Naive thymus-derived CD4-positive, alpha-beta T cell (primary cell): ENCODE measurements at regions of chr9 and their contacts with region 1.

Region 1: DNA sequence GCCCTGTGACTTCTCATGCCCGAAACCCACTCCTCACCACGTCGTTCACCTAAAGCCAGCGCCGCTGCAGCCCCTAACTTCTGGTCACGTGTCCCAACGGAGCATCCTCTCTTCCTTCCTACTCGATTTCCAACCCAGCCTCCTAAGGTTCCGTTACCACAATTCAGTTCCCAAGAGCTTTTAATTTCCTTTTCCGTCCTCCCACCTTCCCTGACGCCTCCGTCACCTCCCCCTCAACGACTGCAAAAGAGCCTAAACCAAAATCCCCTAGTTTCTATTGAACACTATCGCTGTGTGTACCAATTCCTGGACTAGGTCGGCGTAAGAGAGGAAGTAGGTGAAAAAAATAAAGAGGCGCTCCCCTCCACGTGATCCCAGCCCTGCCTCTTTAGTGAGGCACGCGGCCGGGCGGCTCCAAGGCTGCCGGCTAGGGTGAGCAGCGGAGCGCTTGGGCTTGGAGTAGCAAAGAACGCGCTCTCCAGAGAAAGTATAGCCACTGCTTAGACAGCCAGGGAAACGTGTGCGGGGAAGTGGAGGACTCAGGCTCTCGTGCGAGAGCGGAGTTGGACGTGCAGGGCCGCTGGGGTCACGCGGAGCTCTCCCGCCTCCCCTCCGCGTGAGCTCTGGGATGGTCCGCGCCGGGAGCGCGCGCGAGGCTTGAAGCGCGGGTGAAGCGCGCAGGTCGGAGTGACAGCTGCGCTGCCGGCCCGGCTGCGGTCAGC is at the starts of genes CENPP and NOL8:
- DNase-seq: peak; percentile 75 to 91 (median 89)
- ATAC-seq: peak; percentile 95
- H3K4me3 ChIP-seq: peak within 1 kb of the TSS; percentile 90
- H3K4me3 Mint-ChIP-seq: peak within 1 kb of the TSS; percentile 94 to 100 (median 98)
- H3K27ac ChIP-seq: peak within 1 kb of the TSS; percentile 88
- H3K27ac Mint-ChIP-seq: peak within 1 kb of the TSS; percentile 97 to 100 (median 99)
- H3K4me1 ChIP-seq: peaks cover 11 to 12% of the 10 kb centered on the region in 2 donors
- H3K4me1 Mint-ChIP-seq: peaks cover 14 to 41% (median 35%) of the 10 kb centered on the region in 7 donors
- H3K27me3 ChIP-seq: no peaks in the 10 kb centered on the region
- H3K27me3 Mint-ChIP-seq: no peaks in the 10 kb centered on the region
- total RNA-seq, gene CENPP: 2.5 to 24.3 (median 4.1) TPM
- total RNA-seq, gene NOL8: 42.8 to 115 (median 67.2) TPM

Region 2: DNA sequence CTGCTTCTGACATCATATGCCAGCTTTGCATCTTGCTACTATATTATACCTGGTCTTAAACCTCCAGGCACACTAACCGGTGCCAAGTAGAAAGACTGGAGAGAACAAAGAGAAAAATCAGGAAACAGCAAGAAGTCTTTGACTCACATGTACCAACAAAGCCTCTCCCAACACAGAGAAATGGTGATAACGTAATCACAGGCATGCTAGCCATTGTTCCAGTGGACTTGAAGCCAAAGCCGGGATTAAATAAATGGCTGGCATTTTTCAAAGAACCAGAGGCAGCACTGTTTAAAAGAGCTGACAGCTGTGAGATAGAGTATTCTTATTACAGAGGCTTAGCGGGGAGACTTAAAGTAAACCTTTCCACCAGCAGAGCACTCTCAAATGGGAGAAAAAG is 753.4 kb before region 1 on chr9:
- CTCF ChIA-PET with region 1: no interaction called
- POLR2A ChIA-PET with region 1: no interaction called
- intact Hi-C with region 1: no loop called
- DNase-seq: no peak
- ATAC-seq: no peak
- H3K4me3 ChIP-seq: no peak overlapping the region
- H3K4me3 Mint-ChIP-seq: no peak overlapping the region
- H3K27ac ChIP-seq: no peak overlapping the region
- H3K27ac Mint-ChIP-seq: no peak overlapping the region
- H3K4me1 ChIP-seq: no peaks in the 10 kb centered on the region
- H3K4me1 Mint-ChIP-seq: no peaks in the 10 kb centered on the region
- H3K27me3 ChIP-seq: no peaks in the 10 kb centered on the region
- H3K27me3 Mint-ChIP-seq: peaks cover 16 to 27% (median 26%) of the 10 kb centered on the region in 5 donors

Region 3: GRCh38 chr9:92115071-92115858 is 210.2 kb before region 1 on chr9 and contains the start of gene SPTLC1:
- CTCF ChIA-PET with region 1: no interaction called
- POLR2A ChIA-PET with region 1: interaction called, 5 read pairs
- intact Hi-C with region 1: loop called (anchors 1 kb)
- DNase-seq: peak; percentile 89 to 97 (median 94)
- ATAC-seq: peak; percentile 99
- H3K4me3 ChIP-seq: peak within 1 kb of the TSS; percentile 85
- H3K4me3 Mint-ChIP-seq: peak within 1 kb of the TSS; percentile 91 to 99 (median 97)
- H3K27ac ChIP-seq: peak within 1 kb of the TSS; percentile 96
- H3K27ac Mint-ChIP-seq: peak within 1 kb of the TSS; percentile 96 to 100 (median 98)
- H3K4me1 ChIP-seq: peaks cover 17 to 20% of the 10 kb centered on the region in 2 donors
- H3K4me1 Mint-ChIP-seq: peaks cover 17 to 51% (median 42%) of the 10 kb centered on the region in 7 donors
- H3K27me3 ChIP-seq: no peaks in the 10 kb centered on the region
- H3K27me3 Mint-ChIP-seq: peaks cover 0 to 2% (median 0%) of the 10 kb centered on the region in 5 donors
- total RNA-seq, gene SPTLC1: 45.6 to 64.0 (median 51.0) TPM

Region 4: DNA sequence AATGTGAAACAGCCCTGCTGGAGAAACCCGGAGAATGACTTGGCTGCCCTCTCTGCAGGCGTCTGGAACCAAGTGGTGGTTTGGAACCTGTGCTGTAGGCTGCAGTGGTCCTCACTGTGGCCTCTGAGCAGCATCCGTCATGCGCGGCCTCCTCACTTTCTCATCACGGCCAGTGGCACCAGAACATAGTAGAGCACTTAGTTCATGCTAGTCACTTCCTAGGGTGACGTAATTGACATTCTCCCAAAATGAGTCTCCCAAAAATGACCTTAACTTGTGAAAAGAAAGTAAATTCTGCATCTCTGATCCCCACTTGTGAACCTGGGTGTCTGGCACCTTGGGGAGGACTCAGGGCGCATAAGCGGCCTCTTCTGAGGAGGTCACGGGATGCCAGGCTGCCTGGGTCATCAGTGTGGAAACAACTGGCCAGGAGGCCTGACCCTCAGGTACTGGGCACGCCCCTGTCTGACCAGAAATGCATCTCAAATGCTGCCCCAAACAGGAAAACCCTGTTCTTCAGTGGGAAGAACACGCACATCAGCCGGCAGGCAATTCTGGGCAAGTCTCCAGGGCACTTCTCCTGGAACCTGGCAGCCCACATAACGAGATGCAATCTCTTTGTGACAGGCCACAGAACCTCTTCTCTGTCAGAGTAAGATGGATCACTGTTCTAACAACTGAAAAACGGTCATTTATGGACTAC is 173.6 kb before region 1 on chr9:
- CTCF ChIA-PET with region 1: no interaction called
- POLR2A ChIA-PET with region 1: no interaction called
- intact Hi-C with region 1: no loop called
- DNase-seq: no peak
- ATAC-seq: no peak
- H3K4me3 ChIP-seq: no peak overlapping the region
- H3K4me3 Mint-ChIP-seq: no peak overlapping the region
- H3K27ac ChIP-seq: no peak overlapping the region
- H3K27ac Mint-ChIP-seq: no peak overlapping the region
- H3K4me1 ChIP-seq: no peaks in the 10 kb centered on the region
- H3K4me1 Mint-ChIP-seq: peaks cover 0 to 14% (median 0%) of the 10 kb centered on the region in 7 donors
- H3K27me3 ChIP-seq: no peaks in the 10 kb centered on the region
- H3K27me3 Mint-ChIP-seq: peaks cover 4 to 21% (median 10%) of the 10 kb centered on the region in 5 donors

Region 5: DNA sequence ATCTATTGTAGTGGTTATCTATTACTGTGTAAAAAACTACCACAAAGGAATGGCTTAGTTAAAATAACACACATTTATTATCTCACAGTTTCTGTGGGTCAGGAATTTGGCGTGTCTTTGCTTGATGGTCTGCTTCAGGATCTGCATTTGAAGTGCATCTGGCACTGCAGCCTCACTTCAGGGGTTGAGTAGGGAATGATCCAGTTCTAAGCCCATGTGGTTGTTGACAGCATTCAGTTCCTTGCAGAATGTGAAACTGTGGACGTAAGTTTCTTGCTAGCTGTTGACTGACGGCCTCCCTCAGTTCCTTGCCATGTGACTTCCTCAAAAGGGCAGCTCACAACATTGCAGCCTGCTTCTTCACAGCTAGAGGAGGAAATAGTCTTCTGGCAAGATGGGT is 81.0 kb after region 1 on chr9:
- CTCF ChIA-PET with region 1: no interaction called
- POLR2A ChIA-PET with region 1: interaction called, 12 read pairs
- intact Hi-C with region 1: loop called in 1 of 2 experiments (anchors 5 kb)
- DNase-seq: peak in 7 of 9 donors; percentile 27 to 60 (median 49)
- ATAC-seq: peak; percentile 91
- H3K4me3 ChIP-seq: peak overlapping the region; percentile 59
- H3K4me3 Mint-ChIP-seq: peak overlapping the region; percentile 63 to 82 (median 77)
- H3K27ac ChIP-seq: peak overlapping the region; percentile 55
- H3K27ac Mint-ChIP-seq: peak overlapping the region; percentile 71 to 90 (median 87)
- H3K4me1 ChIP-seq: peaks cover 0 to 22% of the 10 kb centered on the region in 2 donors
- H3K4me1 Mint-ChIP-seq: peaks cover 15 to 30% (median 28%) of the 10 kb centered on the region in 7 donors
- H3K27me3 ChIP-seq: no peaks in the 10 kb centered on the region
- H3K27me3 Mint-ChIP-seq: no peaks in the 10 kb centered on the region

Region 6: DNA sequence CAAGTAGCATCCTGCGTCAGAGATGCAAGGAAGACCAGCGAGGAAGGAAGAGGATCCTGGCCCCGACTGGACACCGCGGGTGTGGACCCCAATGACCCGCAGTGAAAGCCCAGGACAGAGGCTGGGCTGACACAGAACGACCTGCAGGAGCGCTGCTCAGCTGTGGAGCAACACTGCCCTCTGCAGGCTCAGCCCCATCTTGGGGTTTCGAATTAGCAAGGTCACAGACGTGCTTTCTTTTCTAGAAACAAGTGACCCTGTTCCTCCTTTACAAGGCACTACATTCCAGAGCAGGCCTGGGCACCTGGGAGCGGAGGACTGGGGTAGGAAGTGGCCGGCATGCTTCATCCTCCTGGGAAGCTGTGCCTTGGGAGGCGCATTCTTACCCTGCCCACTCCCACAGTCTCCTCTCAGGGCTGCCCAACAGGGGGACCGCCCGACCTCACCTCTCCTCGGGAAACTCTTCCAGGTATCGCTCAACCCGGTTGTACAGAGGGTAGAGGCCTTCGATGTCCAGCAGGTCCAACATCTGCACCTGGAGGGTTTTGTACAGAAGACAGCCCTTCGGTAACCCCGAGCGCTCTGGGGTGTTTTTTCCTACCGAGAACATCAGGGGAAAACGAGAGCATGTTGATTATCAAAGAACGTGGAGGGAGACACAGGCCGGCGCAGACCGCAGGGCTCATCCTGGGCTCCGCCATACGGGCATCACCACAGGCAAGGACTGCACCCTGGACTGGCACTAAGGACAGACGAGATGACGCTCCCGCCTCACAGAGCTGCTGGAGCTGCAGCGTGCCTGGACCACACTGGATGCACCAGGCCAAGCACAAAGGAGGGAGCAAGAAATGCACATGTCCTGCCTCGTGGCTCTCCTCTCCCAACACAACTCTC is 309.5 kb after region 1 on chr9:
- CTCF ChIA-PET with region 1: no interaction called
- POLR2A ChIA-PET with region 1: no interaction called
- intact Hi-C with region 1: loop called in 1 of 2 experiments (anchors 5 kb)
- DNase-seq: peak; percentile 17 to 67 (median 46)
- ATAC-seq: peak; percentile 86
- H3K4me3 ChIP-seq: no peak overlapping the region
- H3K4me3 Mint-ChIP-seq: no peak overlapping the region
- H3K27ac ChIP-seq: no peak overlapping the region
- H3K27ac Mint-ChIP-seq: no peak overlapping the region
- H3K4me1 ChIP-seq: no peaks in the 10 kb centered on the region
- H3K4me1 Mint-ChIP-seq: peaks cover 0 to 12% (median 0%) of the 10 kb centered on the region in 7 donors
- H3K27me3 ChIP-seq: no peaks in the 10 kb centered on the region
- H3K27me3 Mint-ChIP-seq: no peaks in the 10 kb centered on the region

Region 7: GRCh38 chr9:92790542-92791527 is 465.4 kb after region 1 on chr9:
- CTCF ChIA-PET with region 1: no interaction called
- POLR2A ChIA-PET with region 1: no interaction called
- intact Hi-C with region 1: loop called in 1 of 2 experiments (anchors 1 kb)
- DNase-seq: peak; percentile 53 to 79 (median 70)
- ATAC-seq: peak; percentile 97
- H3K4me3 ChIP-seq: no peak overlapping the region
- H3K4me3 Mint-ChIP-seq: peak overlapping the region in 1 of 10 donors; percentile 4
- H3K27ac ChIP-seq: no peak overlapping the region
- H3K27ac Mint-ChIP-seq: peak overlapping the region in 2 of 9 donors; percentile 37 to 78
- H3K4me1 ChIP-seq: no peaks in the 10 kb centered on the region
- H3K4me1 Mint-ChIP-seq: peaks cover 2 to 11% (median 7%) of the 10 kb centered on the region in 7 donors
- H3K27me3 ChIP-seq: no peaks in the 10 kb centered on the region
- H3K27me3 Mint-ChIP-seq: peaks cover 0 to 13% (median 6%) of the 10 kb centered on the region in 5 donors

Region 8: GRCh38 chr9:94166237-94166963 is 1841.0 kb after region 1 on chr9:
- CTCF ChIA-PET with region 1: no interaction called
- POLR2A ChIA-PET with region 1: no interaction called
- intact Hi-C with region 1: loop called (anchors 2 to 10 kb)
- DNase-seq: peak; percentile 81 to 96 (median 92)
- ATAC-seq: peak; percentile 72
- H3K4me3 ChIP-seq: peak overlapping the region; percentile 82
- H3K4me3 Mint-ChIP-seq: peak overlapping the region; percentile 84 to 96 (median 88)
- H3K27ac ChIP-seq: peak overlapping the region; percentile 100
- H3K27ac Mint-ChIP-seq: peak overlapping the region; percentile 79 to 97 (median 91)
- H3K4me1 ChIP-seq: peaks cover 37 to 38% of the 10 kb centered on the region in 2 donors
- H3K4me1 Mint-ChIP-seq: peaks cover 33 to 61% (median 58%) of the 10 kb centered on the region in 7 donors
- H3K27me3 ChIP-seq: no peaks in the 10 kb centered on the region
- H3K27me3 Mint-ChIP-seq: no peaks in the 10 kb centered on the region